Activated T-helper 1 cell treated with anti-CD3 and anti-CD28 coated beads, Interleukin-12 subunit alpha, Interleukin-12 subunit beta, Interleukin-2, Interleukin-4 antibody, amounts not matched to agents 30 ng/mL and 10 ng/mL and 1 ng/mL, durations not matched to agents 14 hours and 24 hours and 36 hours (primary cell): ENCODE measurements at regions of chr6 and their contacts with region 1.

Region 1: DNA sequence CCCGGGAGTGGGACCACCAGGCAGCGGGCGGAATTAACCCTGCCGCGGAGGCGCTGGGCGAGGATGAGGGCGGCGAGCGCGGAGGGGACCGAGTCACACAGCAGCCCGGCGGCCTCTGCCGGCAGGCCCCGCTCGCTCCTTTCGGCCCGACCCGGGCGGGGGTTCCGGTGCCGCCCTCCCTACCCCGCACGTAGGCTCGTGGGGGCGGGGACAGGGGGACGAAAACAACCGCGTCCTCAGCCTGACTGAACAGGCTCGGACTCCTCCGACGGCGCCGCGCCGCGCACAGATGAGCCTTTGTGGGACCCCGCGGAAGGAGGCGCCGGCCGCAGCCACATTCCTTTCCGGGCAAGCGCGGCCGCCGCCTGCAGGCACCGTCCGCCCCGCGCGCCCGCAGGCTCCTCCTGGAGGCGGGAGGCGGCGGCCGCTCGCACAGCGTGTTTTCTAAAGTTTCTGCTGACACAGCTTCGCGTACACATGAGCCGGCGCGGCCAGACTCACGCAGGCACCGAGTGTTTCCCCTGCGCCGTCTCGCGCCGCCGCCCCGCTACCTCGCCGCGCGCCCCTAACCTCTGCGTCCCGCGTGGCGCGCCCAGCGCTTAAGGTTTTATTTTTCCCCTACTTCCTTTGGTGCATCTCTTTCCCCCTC is 244.3 kb downstream of the ARID1B start:
- DNase-seq: peak; percentile 88
- H3K4me3 Mint-ChIP-seq: peak overlapping the region; percentile 91
- H3K27ac Mint-ChIP-seq: peak overlapping the region; percentile 98
- H3K4me1 Mint-ChIP-seq: peaks cover 49% of the 10 kb centered on the region
- H3K27me3 Mint-ChIP-seq: no peaks in the 10 kb centered on the region

Region 2: GRCh38 chr6:156857573-156857972 is 163.9 kb before region 1 on chr6:
- intact Hi-C with region 1: loop called (anchors 1 kb)
- DNase-seq: peak; percentile 11
- H3K4me3 Mint-ChIP-seq: no peak overlapping the region
- H3K27ac Mint-ChIP-seq: peak overlapping the region; percentile 90
- H3K4me1 Mint-ChIP-seq: peaks cover 56% of the 10 kb centered on the region
- H3K27me3 Mint-ChIP-seq: no peaks in the 10 kb centered on the region

Region 3: DNA sequence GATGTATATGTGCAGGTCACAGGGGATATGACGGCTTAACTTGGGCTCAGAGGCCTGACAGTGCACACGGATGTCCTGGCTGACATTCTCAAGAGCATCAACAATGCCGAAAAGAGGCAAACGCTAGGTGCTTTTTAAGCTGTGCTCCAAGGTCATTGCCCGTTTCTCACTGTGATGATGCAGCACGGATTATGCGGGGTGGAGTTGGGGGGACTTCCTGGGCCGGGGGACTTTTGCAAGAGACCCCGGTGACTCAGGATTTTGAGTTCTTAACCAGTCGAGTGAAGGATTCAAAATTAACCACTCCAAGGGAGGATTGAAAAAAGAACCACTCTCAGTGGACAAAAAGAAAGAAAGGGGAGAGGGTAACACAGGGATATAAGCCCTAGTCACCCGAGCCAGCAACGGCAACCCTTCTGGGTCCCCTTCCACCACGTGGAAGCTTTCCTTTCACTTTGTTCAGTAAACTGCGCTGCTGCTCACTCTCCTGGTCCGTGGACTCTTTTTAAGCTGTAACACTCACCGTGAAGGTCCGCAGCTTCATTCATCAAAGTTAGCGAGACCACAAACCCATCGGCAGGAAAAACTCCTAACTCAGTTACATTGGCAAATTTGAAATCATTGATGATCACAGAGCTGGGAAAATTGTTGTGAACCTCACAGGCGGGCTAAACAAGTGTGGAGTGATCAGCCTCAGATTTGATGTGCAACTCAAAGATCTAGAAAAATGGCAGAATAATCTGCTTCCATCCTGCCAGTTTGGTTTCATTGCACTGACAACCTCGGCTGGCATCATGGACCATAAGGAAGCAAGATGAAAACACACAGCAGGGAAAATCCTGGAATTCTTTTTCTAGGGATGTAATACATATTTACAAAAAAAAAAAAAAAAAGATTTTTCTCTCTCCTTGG is 45.0 kb before region 1 on chr6:
- intact Hi-C with region 1: loop called (anchors 2 kb)
- DNase-seq: no peak
- H3K4me3 Mint-ChIP-seq: peak overlapping the region; percentile 76
- H3K27ac Mint-ChIP-seq: peak overlapping the region; percentile 64
- H3K4me1 Mint-ChIP-seq: peaks cover 57% of the 10 kb centered on the region
- H3K27me3 Mint-ChIP-seq: peaks cover 2% of the 10 kb centered on the region

Region 4: GRCh38 chr6:157054531-157054979 is 33.1 kb after region 1 on chr6:
- intact Hi-C with region 1: loop called (anchors 1 kb)
- DNase-seq: peak; percentile 35
- H3K4me3 Mint-ChIP-seq: peak overlapping the region; percentile 53
- H3K27ac Mint-ChIP-seq: peak overlapping the region; percentile 95
- H3K4me1 Mint-ChIP-seq: peaks cover 33% of the 10 kb centered on the region
- H3K27me3 Mint-ChIP-seq: no peaks in the 10 kb centered on the region

Region 5: DNA sequence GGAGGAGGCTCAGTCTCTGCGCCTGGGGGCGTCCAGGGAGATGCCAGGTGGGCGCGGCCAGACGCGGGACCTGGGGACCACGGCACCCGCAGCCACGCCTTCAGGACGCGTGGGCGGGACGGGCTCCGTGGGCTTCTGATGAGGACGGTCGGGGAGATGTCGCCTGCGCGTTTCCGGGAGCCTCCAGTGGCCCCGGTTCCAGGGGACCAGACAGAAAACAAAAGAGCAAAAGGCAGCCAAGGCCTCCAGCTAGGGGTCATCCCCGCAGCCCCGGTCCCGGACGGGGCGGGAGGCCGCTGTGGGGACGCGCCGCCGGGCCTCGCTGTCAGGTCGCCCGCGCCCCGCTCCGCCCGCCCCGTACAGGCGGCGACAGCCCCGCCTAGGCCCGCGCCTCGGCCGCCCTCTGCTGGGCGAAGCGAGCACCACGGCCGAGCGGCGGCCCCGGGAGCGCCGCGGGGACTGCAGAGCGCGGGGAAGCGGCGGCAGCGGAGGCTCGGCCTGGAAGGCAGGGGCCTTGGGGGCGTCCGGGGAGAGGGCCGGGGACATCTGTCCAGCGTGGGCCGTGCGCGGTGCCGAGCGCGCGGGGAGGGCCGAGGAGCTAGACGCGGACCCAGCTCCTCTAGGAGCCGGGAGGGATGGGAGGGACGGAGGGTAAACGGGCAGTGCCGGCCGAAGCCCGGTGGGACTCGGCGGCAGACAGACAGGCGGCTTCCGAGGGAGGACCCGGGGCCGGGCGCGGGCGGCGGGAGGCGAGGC is 253.2 kb after region 1 on chr6:
- intact Hi-C with region 1: loop called (anchors 2 kb)
- DNase-seq: peak; percentile 78
- H3K4me3 Mint-ChIP-seq: peak overlapping the region; percentile 86
- H3K27ac Mint-ChIP-seq: peak overlapping the region; percentile 67
- H3K4me1 Mint-ChIP-seq: peaks cover 4% of the 10 kb centered on the region
- H3K27me3 Mint-ChIP-seq: peaks cover 10% of the 10 kb centered on the region